H1 (cell line): ENCODE measurements at regions of chr6 and their contacts with region 1.

Region 1: DNA sequence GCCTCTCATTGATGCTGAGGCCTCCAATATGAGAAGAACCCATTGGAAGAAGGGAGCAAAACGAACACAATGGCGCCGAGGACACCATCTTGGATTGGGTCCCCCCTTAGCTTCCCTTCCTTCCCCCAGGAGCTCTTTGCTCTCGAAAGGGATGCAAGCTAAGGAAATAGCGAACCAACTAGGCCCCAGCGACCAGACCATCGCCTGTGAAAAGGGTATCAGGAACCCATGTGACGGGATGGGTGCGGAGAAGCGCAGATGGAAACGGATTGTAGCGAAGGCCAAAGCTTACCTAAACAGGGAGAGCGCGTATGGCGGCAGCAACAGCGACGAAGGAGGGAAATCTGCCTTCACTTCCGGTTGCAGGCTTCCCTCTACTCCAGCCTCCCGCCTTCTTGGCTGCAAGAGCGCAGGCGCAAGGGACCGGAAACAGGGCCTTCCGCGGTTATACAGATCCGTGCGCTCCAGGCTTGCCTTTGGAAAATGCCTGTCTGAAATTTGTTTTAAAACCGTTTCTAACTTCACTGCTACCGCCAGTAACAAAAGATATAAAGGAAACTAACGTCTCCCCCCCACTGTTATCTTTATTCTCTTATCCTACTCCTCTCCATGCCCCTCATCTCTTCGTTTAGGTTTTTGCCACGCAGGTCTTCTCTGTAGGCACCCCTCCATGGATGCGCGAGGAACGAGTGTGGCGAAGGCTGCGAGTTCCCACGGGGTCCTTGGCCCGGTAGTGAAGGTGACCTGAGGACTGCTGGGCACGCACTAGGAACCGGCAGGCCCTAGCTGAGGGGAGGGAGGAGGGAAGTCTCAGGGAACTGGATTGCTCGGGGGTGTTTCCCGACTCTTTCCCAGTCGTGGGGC is at the start of gene DDX39B:
- DNase-seq: peak; percentile 89 to 90
- H3K4me3 ChIP-seq: peak within 1 kb of the TSS; percentile 75 to 99 (median 97)
- H3K27ac ChIP-seq: peak within 1 kb of the TSS; percentile 99
- H3K4me1 ChIP-seq: peaks cover 4 to 18% (median 10%) of the 10 kb centered on the region in 4 experiments; a peak in 5 of 7 replicates
- H3K27me3 ChIP-seq: no peaks in the 10 kb centered on the region
- CTCF ChIP-seq: no peak
- EP300 ChIP-seq: peak in 1 of 2 experiments; percentile 20; a peak in 1 of 3 replicates
- POLR2A ChIP-seq: peak; percentile 97 to 99
- RAD21 ChIP-seq: no peak
- total RNA-seq, gene DDX39B: 780 and 794 TPM in 2 replicates

Region 2: GRCh38 chr6:31377029-31377428 is 164.9 kb before region 1 on chr6:
- CTCF ChIA-PET with region 1: no interaction called
- POLR2A ChIA-PET with region 1: no interaction called
- DNase-seq: no peak
- H3K4me3 ChIP-seq: no peak overlapping the region
- H3K27ac ChIP-seq: no peak overlapping the region
- H3K4me1 ChIP-seq: no peaks in the 10 kb centered on the region
- H3K27me3 ChIP-seq: peaks cover 0 to 3% (median 0%) of the 10 kb centered on the region in 4 experiments; a peak in 1 of 7 replicates
- CTCF ChIP-seq: no peak
- EP300 ChIP-seq: no peak
- POLR2A ChIP-seq: no peak
- RAD21 ChIP-seq: no peak

Region 3: GRCh38 chr6:31430449-31430848 is 111.4 kb before region 1 on chr6:
- CTCF ChIA-PET with region 1: no interaction called
- POLR2A ChIA-PET with region 1: no interaction called
- DNase-seq: no peak
- H3K4me3 ChIP-seq: no peak overlapping the region
- H3K27ac ChIP-seq: no peak overlapping the region
- H3K4me1 ChIP-seq: no peaks in the 10 kb centered on the region
- H3K27me3 ChIP-seq: no peaks in the 10 kb centered on the region
- CTCF ChIP-seq: no peak
- EP300 ChIP-seq: no peak
- POLR2A ChIP-seq: no peak
- RAD21 ChIP-seq: no peak

Region 4: GRCh38 chr6:31513456-31514165 is 28.3 kb before region 1 on chr6:
- CTCF ChIA-PET with region 1: interaction called, 3 read pairs
- POLR2A ChIA-PET with region 1: interaction called, 20 read pairs
- DNase-seq: no peak
- H3K4me3 ChIP-seq: no peak overlapping the region
- H3K27ac ChIP-seq: no peak overlapping the region
- H3K4me1 ChIP-seq: no peaks in the 10 kb centered on the region
- H3K27me3 ChIP-seq: no peaks in the 10 kb centered on the region
- CTCF ChIP-seq: no peak
- EP300 ChIP-seq: no peak
- POLR2A ChIP-seq: no peak
- RAD21 ChIP-seq: no peak

Region 5: DNA sequence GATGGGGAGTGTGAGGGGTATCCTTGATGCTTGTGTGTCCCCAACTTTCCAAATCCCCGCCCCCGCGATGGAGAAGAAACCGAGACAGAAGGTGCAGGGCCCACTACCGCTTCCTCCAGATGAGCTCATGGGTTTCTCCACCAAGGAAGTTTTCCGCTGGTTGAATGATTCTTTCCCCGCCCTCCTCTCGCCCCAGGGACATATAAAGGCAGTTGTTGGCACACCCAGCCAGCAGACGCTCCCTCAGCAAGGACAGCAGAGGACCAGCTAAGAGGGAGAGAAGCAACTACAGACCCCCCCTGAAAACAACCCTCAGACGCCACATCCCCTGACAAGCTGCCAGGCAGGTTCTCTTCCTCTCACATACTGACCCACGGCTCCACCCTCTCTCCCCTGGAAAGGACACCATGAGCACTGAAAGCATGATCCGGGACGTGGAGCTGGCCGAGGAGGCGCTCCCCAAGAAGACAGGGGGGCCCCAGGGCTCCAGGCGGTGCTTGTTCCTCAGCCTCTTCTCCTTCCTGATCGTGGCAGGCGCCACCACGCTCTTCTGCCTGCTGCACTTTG is 33.5 kb after region 1 on chr6 and contains the start of gene TNF:
- CTCF ChIA-PET with region 1: interaction called, 254 read pairs
- POLR2A ChIA-PET with region 1: interaction called, 16 read pairs
- DNase-seq: no peak
- H3K4me3 ChIP-seq: no peak within 1 kb of the TSS
- H3K27ac ChIP-seq: no peak within 1 kb of the TSS
- H3K4me1 ChIP-seq: peaks cover 0 to 3% (median 0%) of the 10 kb centered on the region in 4 experiments; a peak in 3 of 7 replicates
- H3K27me3 ChIP-seq: peaks cover 0 to 7% (median 6%) of the 10 kb centered on the region in 4 experiments; a peak in 5 of 7 replicates
- CTCF ChIP-seq: no peak
- EP300 ChIP-seq: no peak
- POLR2A ChIP-seq: no peak
- RAD21 ChIP-seq: no peak
- total RNA-seq, gene TNF: not detected in 2 replicates

Region 6: GRCh38 chr6:31619805-31620585 is 78.1 kb after region 1 on chr6:
- CTCF ChIA-PET with region 1: interaction called, 9 read pairs
- POLR2A ChIA-PET with region 1: interaction called, 173 read pairs
- DNase-seq: peak; percentile 94 to 97
- H3K4me3 ChIP-seq: peak overlapping the region; percentile 72 to 97 (median 82)
- H3K27ac ChIP-seq: peak overlapping the region; percentile 99
- H3K4me1 ChIP-seq: peaks cover 2 to 12% (median 7%) of the 10 kb centered on the region in 4 experiments; a peak in 6 of 7 replicates
- H3K27me3 ChIP-seq: no peaks in the 10 kb centered on the region
- CTCF ChIP-seq: no peak
- EP300 ChIP-seq: no peak
- POLR2A ChIP-seq: peak; percentile 84 to 94
- RAD21 ChIP-seq: no peak

Region 7: GRCh38 chr6:31660381-31661261 is 118.7 kb after region 1 on chr6 and contains the start of gene C6orf47:
- CTCF ChIA-PET with region 1: interaction called, 4 read pairs
- POLR2A ChIA-PET with region 1: interaction called, 48 read pairs
- DNase-seq: peak; percentile 59 to 90
- H3K4me3 ChIP-seq: peak within 1 kb of the TSS; percentile 85 to 94 (median 88)
- H3K27ac ChIP-seq: peak within 1 kb of the TSS; percentile 63
- H3K4me1 ChIP-seq: peaks cover 0 to 15% (median 4%) of the 10 kb centered on the region in 4 experiments; a peak in 5 of 7 replicates
- H3K27me3 ChIP-seq: no peaks in the 10 kb centered on the region
- CTCF ChIP-seq: no peak
- EP300 ChIP-seq: no peak
- POLR2A ChIP-seq: peak in 1 of 2 experiments; percentile 83; a peak in 2 of 3 replicates
- RAD21 ChIP-seq: peak in 1 of 2 experiments; percentile 3; a peak in 1 of 4 replicates
- total RNA-seq, gene C6orf47: 14.6 and 15.6 TPM in 2 replicates